ENCODE measurements at regions of chr6 and their contacts with region 1.

Region 1: GRCh38 chr6:26537846-26538571 is at the start of gene HMGN4:
- DNase-seq: peak; percentile 80
- H3K4me3 Mint-ChIP-seq: peak within 1 kb of the TSS; percentile 91
- H3K27ac Mint-ChIP-seq: peak within 1 kb of the TSS; percentile 96
- H3K4me1 Mint-ChIP-seq: peaks cover 60% of the 10 kb centered on the region
- H3K27me3 Mint-ChIP-seq: peaks cover 3% of the 10 kb centered on the region
- total RNA-seq, gene HMGN4: 77.6 and 86.8 TPM in 2 replicates

Region 2: GRCh38 chr6:26054857-26055669 is 482.9 kb before region 1 on chr6:
- intact Hi-C with region 1: loop called (anchors 10 kb)
- DNase-seq: peak; percentile 83
- H3K4me3 Mint-ChIP-seq: peak overlapping the region; percentile 91
- H3K27ac Mint-ChIP-seq: peak overlapping the region; percentile 99
- H3K4me1 Mint-ChIP-seq: peaks cover 42% of the 10 kb centered on the region
- H3K27me3 Mint-ChIP-seq: peaks cover 3% of the 10 kb centered on the region

Region 3: GRCh38 chr6:26322645-26323482 is 215.1 kb before region 1 on chr6:
- intact Hi-C with region 1: loop called (anchors 1 kb)
- DNase-seq: peak; percentile 63
- H3K4me3 Mint-ChIP-seq: peak overlapping the region; percentile 89
- H3K27ac Mint-ChIP-seq: peak overlapping the region; percentile 51
- H3K4me1 Mint-ChIP-seq: peaks cover 51% of the 10 kb centered on the region
- H3K27me3 Mint-ChIP-seq: peaks cover 14% of the 10 kb centered on the region

Region 4: DNA sequence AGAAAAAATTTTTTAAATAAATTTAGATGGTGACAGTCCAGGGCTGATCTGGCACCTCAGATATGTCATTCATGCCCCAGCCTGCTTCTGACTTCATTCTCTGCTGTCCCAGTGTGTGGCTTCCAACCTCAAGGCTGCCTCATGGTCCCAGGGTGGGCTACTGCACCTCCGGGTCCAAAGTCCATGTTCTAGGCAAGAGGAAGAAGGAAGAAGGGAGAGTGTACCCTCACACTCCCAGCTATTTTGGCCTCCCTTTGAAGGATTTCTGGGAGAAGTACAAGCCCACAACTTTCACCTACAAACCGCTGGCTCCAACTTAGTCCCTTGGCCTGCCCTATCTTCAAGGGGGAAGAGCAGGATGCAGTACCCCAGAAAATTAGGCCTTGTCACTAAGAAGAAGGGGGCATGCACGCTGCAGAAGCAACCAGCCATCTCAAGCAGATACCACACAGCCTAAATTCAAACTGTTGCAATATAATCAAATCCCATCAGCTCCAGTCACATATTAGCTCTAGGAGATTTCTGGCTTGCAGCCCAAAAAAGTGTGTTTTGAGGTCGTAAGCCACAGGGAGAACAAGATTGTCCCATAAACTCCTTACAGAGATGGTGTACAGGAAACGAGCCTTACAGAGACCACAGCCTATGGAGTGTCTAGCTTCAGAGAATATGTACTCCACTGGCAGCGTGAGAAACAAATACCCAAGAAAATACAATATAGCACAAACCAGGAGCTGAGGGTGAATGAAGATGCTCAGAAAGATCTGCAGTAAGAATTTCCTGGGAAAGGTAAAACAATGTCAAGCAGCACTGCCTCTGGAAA is 173.9 kb before region 1 on chr6:
- intact Hi-C with region 1: loop called (anchors 1 kb)
- DNase-seq: peak; percentile 10
- H3K4me3 Mint-ChIP-seq: no peak overlapping the region
- H3K27ac Mint-ChIP-seq: no peak overlapping the region
- H3K4me1 Mint-ChIP-seq: peaks cover 45% of the 10 kb centered on the region
- H3K27me3 Mint-ChIP-seq: no peaks in the 10 kb centered on the region

Region 5: GRCh38 chr6:26473758-26474438 is 64.1 kb before region 1 on chr6:
- intact Hi-C with region 1: loop called (anchors 1 kb)
- DNase-seq: peak; percentile 78
- H3K4me3 Mint-ChIP-seq: peak overlapping the region; percentile 99
- H3K27ac Mint-ChIP-seq: peak overlapping the region; percentile 100
- H3K4me1 Mint-ChIP-seq: peaks cover 46% of the 10 kb centered on the region
- H3K27me3 Mint-ChIP-seq: no peaks in the 10 kb centered on the region

Region 6: GRCh38 chr6:26568601-26569432 is 30.8 kb after region 1 on chr6:
- intact Hi-C with region 1: loop called (anchors 1 kb)
- DNase-seq: peak; percentile 94
- H3K4me3 Mint-ChIP-seq: peak overlapping the region; percentile 93
- H3K27ac Mint-ChIP-seq: peak overlapping the region; percentile 98
- H3K4me1 Mint-ChIP-seq: peaks cover 47% of the 10 kb centered on the region
- H3K27me3 Mint-ChIP-seq: peaks cover 5% of the 10 kb centered on the region

Measured in activated T-helper 1 cell treated with anti-CD3 and anti-CD28 coated beads, Interleukin-12 subunit alpha, Interleukin-12 subunit beta, Interleukin-2, Interleukin-4 antibody, amounts not matched to agents 30 ng/mL and 10 ng/mL and 1 ng/mL, durations not matched to agents 14 hours and 24 hours and 36 hours (primary cell).